ENCODE measurements at regions of chr10 and their contacts with region 1.

Region 1: GRCh38 chr10:97037365-97038361 is 148.1 kb downstream of the SLIT1 start:
- DNase-seq: peak; percentile 77
- ATAC-seq: peak; percentile 87
- H3K4me3 Mint-ChIP-seq: peak overlapping the region; percentile 36
- H3K27ac Mint-ChIP-seq: peak overlapping the region; percentile 36
- H3K4me1 Mint-ChIP-seq: peaks cover 10% of the 10 kb centered on the region
- H3K27me3 Mint-ChIP-seq: peaks cover 2% of the 10 kb centered on the region

Region 2: GRCh38 chr10:96910488-96911395 is 126.9 kb before region 1 on chr10:
- CTCF ChIA-PET with region 1: interaction called, 11 read pairs
- POLR2A ChIA-PET with region 1: no interaction called
- DNase-seq: peak; percentile 48
- ATAC-seq: no peak
- H3K4me3 Mint-ChIP-seq: no peak overlapping the region
- H3K27ac Mint-ChIP-seq: no peak overlapping the region
- H3K4me1 Mint-ChIP-seq: peaks cover 11% of the 10 kb centered on the region
- H3K27me3 Mint-ChIP-seq: no peaks in the 10 kb centered on the region

Region 3: DNA sequence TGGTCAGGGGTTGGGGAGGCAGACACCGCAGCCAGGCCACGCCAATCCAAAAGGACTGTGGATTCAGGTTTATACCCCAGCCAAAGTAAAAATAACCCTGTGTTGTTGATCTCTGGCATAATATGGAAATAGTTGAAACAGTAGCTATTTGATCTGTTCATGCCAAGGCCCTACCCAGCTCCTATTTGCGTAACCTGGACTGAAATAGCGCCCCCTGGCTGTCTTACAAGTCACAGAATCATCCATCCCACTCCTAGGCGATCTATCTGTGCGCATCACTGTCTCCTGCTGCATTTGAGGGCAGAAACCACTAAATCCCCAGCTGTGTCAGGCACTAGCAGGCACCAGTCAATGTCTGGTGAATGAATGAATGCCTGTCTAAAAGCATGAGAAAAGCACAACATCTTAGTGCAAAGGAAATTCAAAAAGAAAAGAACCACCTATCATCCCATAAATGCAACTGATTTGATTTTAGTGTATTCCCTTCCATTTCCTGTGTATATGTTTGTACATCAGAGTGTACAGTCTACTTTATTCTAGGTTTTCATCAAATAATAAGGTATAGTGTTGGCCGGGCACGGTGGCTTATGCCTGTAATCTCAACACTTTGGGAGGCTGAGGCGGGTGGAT is 11.9 kb before region 1 on chr10:
- CTCF ChIA-PET with region 1: interaction called, 86 read pairs
- POLR2A ChIA-PET with region 1: no interaction called
- DNase-seq: peak; percentile 76
- ATAC-seq: peak; percentile 70
- H3K4me3 Mint-ChIP-seq: no peak overlapping the region
- H3K27ac Mint-ChIP-seq: no peak overlapping the region
- H3K4me1 Mint-ChIP-seq: peaks cover 7% of the 10 kb centered on the region
- H3K27me3 Mint-ChIP-seq: peaks cover 9% of the 10 kb centered on the region

Region 4: GRCh38 chr10:97057491-97058235 is 20.0 kb after region 1 on chr10:
- CTCF ChIA-PET with region 1: interaction called, 14 read pairs
- POLR2A ChIA-PET with region 1: no interaction called
- DNase-seq: no peak
- ATAC-seq: no peak
- H3K4me3 Mint-ChIP-seq: no peak overlapping the region
- H3K27ac Mint-ChIP-seq: no peak overlapping the region
- H3K4me1 Mint-ChIP-seq: no peaks in the 10 kb centered on the region
- H3K27me3 Mint-ChIP-seq: peaks cover under 1% of the 10 kb centered on the region

Region 5: GRCh38 chr10:97196223-97197029 is 158.8 kb after region 1 on chr10:
- CTCF ChIA-PET with region 1: interaction called, 11 read pairs
- POLR2A ChIA-PET with region 1: no interaction called
- DNase-seq: peak; percentile 77
- ATAC-seq: peak; percentile 90
- H3K4me3 Mint-ChIP-seq: peak overlapping the region; percentile 72
- H3K27ac Mint-ChIP-seq: no peak overlapping the region
- H3K4me1 Mint-ChIP-seq: peaks cover 25% of the 10 kb centered on the region
- H3K27me3 Mint-ChIP-seq: peaks cover 40% of the 10 kb centered on the region

Region 6: DNA sequence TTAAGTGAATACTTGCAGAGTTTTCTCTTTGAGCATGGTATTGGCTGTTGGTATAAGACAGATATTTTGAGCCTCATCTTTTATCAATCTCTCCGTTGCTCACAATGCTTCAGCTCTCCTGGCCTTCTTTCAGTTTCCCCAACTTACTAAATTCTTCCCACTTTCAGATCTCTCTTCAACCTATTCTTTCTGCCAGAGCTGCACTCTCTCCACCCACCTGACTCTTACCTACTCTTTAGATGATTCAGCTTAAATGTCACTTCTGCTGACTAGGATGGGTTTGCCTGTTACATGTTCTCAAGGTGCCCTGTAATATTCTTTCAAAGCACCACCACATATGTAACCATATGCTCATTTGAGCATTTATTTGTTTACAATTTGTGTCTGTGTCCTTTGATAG is 406.5 kb after region 1 on chr10:
- CTCF ChIA-PET with region 1: no interaction called
- POLR2A ChIA-PET with region 1: no interaction called
- DNase-seq: no peak
- ATAC-seq: no peak
- H3K4me3 Mint-ChIP-seq: peak overlapping the region; percentile 9
- H3K27ac Mint-ChIP-seq: no peak overlapping the region
- H3K4me1 Mint-ChIP-seq: peaks cover 40% of the 10 kb centered on the region
- H3K27me3 Mint-ChIP-seq: no peaks in the 10 kb centered on the region

Measured in activated CD8-positive, alpha-beta T cell treated with anti-CD3 and anti-CD28 coated beads, Interleukin-2, amount 10 ng/mL, durations not matched to agents 7 days and 5 days (primary cell).